Posterior vena cava (tissue), 2 donors: ENCODE measurements at regions of chr6 and their contacts with region 1.

Region 1: GRCh38 chr6:36216559-36216958 is 20.0 kb downstream of the BRPF3 start:
- DNase-seq: no peak

Region 2: GRCh38 chr6:36123257-36124139 is 93.1 kb before region 1 on chr6:
- intact Hi-C with region 1: no loop called
- DNase-seq: peak; percentile 93

Region 3: GRCh38 chr6:36230360-36231085 is 14.0 kb after region 1 on chr6:
- intact Hi-C with region 1: loop called in 1 of 2 experiments (anchors 2 kb)
- DNase-seq: no peak